Heart right ventricle (tissue), 16 donors: ENCODE measurements at regions of chr15 and their contacts with region 1.

Region 1: GRCh38 chr15:97984157-97984556 is 23.7 kb downstream of the ARRDC4 start:
- DNase-seq: no peak
- ATAC-seq: no peak
- H3K4me3 ChIP-seq: no peak overlapping the region
- H3K27ac ChIP-seq: no peak overlapping the region
- H3K4me1 ChIP-seq: peaks cover 0 to 7% (median 0%) of the 10 kb centered on the region in 9 donors
- H3K27me3 ChIP-seq: peaks cover 0 to 4% (median 0%) of the 10 kb centered on the region in 7 donors
- CTCF ChIP-seq: no peak

Region 2: GRCh38 chr15:97929456-97929855 is 54.7 kb before region 1 on chr15:
- intact Hi-C with region 1: loop called in 1 of 10 experiments (anchors 10 kb)
- DNase-seq: peak in 1 of 2 donors; percentile 29
- ATAC-seq: peak in 7 of 8 donors; percentile 33 to 75 (median 61)
- H3K4me3 ChIP-seq: no peak overlapping the region
- H3K27ac ChIP-seq: no peak overlapping the region
- H3K4me1 ChIP-seq: no peaks in the 10 kb centered on the region
- H3K27me3 ChIP-seq: peaks cover 0 to 6% (median 0%) of the 10 kb centered on the region in 7 donors
- CTCF ChIP-seq: no peak